ENCODE measurements at regions of chr17 and their contacts with region 1.

Region 1: DNA sequence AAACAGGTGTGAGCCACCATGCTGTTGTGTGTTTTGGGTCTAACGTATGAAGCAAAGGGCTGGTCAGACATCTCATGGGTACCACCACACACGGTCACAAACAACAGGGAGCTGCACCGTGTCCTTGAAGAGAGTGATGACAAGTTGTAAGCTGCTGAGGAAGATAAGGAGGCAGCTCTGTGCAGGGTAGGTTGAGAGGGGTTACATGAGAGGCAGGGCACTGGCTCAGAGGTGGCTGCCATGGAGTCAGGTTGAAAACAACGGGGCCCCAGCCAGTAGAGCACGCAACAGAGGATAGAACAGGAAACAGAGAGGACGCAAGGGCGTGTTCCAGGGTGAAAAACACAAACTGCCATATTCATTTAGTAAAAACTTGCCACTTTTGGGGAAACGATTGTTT is 52.2 kb downstream of the TRARG1 start:
- DNase-seq: no peak
- H3K4me3 ChIP-seq: no peak overlapping the region
- H3K4me3 Mint-ChIP-seq: peak overlapping the region in 1 of 2 donors; percentile 49
- H3K27ac ChIP-seq: no peak overlapping the region
- H3K27ac Mint-ChIP-seq: peak overlapping the region in 1 of 7 donors; percentile 47
- H3K4me1 ChIP-seq: no peaks in the 10 kb centered on the region
- H3K4me1 Mint-ChIP-seq: peaks cover 3% of the 10 kb centered on the region
- H3K27me3 ChIP-seq: peaks cover 0 to 3% of the 10 kb centered on the region in 2 donors
- H3K27me3 Mint-ChIP-seq: peaks cover 16 to 32% (median 26%) of the 10 kb centered on the region in 3 donors
- CTCF ChIP-seq: no peak

Region 2: DNA sequence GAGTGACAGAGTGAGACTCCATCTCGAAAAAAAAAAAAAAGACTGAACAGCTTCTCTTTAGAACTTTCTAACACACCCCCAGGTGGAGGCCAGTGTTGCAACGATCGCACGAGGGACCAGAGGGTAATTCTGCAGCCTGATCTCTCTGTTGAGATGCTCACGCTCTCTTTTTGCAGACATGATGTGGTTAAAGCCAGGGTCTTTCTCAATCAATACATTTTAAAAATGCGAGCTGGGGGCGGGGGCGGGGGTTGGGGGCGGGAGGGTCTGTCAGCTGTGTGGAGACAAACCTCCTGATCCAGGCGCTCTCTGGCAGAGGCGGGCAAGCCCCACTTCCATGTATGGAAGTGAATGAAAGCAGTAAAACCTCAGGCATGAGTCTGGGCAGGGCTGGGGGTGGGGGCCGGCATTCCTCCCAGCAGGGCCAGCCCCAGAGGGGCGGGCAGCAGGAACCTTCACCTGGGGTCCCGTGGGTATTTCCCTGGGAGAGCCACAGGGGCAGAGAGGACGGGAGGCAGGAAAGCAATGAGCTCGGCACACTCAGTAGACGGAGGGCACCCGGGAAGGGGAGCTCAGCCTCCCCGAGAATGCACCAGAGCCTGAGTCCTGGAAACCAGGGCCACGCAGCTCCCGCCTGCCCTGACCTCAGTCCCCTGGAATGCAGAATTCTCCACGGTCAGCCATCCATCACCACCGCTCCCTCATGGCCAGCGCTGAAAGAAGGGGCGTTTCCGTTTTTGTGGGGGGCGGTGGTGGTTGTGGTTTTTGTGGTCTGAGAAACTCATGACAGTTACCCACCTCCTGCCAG is 380.2 kb before region 1 on chr17:
- intact Hi-C with region 1: no loop called
- DNase-seq: no peak
- H3K4me3 ChIP-seq: no peak overlapping the region
- H3K4me3 Mint-ChIP-seq: peak overlapping the region in 1 of 2 donors; percentile 55
- H3K27ac ChIP-seq: no peak overlapping the region
- H3K27ac Mint-ChIP-seq: no peak overlapping the region
- H3K4me1 ChIP-seq: no peaks in the 10 kb centered on the region
- H3K4me1 Mint-ChIP-seq: no peaks in the 10 kb centered on the region
- H3K27me3 ChIP-seq: peaks cover 2 to 17% of the 10 kb centered on the region in 2 donors
- H3K27me3 Mint-ChIP-seq: peaks cover 20 to 35% (median 23%) of the 10 kb centered on the region in 3 donors
- CTCF ChIP-seq: no peak

Region 3: DNA sequence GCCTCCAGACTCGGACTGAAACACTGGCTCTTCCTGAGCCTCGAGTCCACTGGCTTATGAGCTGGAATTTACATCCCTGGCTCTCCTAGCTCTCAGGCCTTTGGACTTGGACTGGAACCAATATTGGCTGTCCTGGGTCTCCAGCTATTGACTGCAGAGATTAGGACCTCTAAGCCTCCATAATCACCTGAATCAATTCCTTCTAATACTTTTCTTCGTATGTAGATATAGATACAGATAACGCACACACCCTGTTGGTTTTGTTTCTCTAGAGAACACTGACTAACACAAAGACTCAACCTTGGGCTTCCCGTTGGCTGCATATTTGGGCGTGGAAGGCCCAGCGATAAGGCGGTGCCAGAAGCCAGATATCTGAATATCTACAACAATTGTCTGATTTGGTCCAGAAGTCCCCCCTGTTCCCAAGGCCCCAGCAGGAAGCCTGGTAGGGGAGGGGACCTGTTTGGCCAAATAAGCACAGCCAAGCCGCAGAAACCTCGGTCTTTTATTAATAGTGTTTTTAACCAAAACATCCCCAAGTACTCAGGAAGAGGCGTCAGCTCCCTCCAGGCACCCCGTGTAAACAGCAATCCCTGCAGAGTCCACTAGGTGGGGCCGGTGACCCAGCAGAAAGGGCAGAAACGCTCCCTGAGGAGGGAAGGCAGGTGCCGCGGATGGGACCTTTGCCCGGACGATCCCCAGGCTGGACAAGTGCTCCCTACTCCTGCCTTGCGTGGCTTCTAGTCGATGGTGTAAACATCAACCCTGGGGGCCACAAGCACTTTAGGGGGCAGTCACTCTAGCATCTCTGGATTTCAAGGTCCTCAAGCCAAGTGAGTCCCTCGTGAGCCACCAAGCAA is 208.9 kb before region 1 on chr17:
- intact Hi-C with region 1: loop called (anchors 5 to 10 kb)
- DNase-seq: peak; percentile 57 to 71 (median 65)
- H3K4me3 ChIP-seq: no peak overlapping the region
- H3K4me3 Mint-ChIP-seq: no peak overlapping the region
- H3K27ac ChIP-seq: peak overlapping the region in 1 of 2 donors; percentile 6
- H3K27ac Mint-ChIP-seq: peak overlapping the region in 2 of 7 donors; percentile 65
- H3K4me1 ChIP-seq: peaks cover 5 to 10% of the 10 kb centered on the region in 2 donors
- H3K4me1 Mint-ChIP-seq: peaks cover 9% of the 10 kb centered on the region
- H3K27me3 ChIP-seq: no peaks in the 10 kb centered on the region
- H3K27me3 Mint-ChIP-seq: peaks cover 0 to 3% (median 3%) of the 10 kb centered on the region in 3 donors
- CTCF ChIP-seq: peak; percentile 91

Region 4: DNA sequence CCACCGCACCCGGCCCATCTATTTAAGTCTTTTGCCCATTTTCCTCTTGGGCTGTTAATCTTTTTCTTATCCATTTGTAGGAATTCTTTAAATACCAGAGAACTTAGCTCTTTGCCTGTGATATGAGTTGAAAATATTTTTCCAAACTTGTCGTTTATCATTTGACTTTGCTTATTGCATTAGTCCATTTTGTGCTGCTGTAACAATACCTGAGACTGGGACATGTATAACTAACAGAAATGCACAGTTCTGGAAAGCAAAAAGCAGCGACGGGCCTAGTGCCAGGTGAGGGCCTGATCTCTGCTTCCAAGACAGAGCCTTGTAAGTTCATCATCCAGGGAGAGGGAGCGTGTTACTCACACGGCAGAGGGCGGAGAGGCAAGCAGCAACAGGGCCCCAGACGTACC is 87.1 kb before region 1 on chr17:
- intact Hi-C with region 1: no loop called
- DNase-seq: no peak
- H3K4me3 ChIP-seq: no peak overlapping the region
- H3K4me3 Mint-ChIP-seq: no peak overlapping the region
- H3K27ac ChIP-seq: no peak overlapping the region
- H3K27ac Mint-ChIP-seq: no peak overlapping the region
- H3K4me1 ChIP-seq: no peaks in the 10 kb centered on the region
- H3K4me1 Mint-ChIP-seq: peaks cover 7% of the 10 kb centered on the region
- H3K27me3 ChIP-seq: no peaks in the 10 kb centered on the region
- H3K27me3 Mint-ChIP-seq: peaks cover 4 to 22% (median 20%) of the 10 kb centered on the region in 3 donors
- CTCF ChIP-seq: no peak

Region 5: GRCh38 chr17:1260086-1260769 is 71.5 kb before region 1 on chr17:
- intact Hi-C with region 1: loop called (anchors 1 to 5 kb)
- DNase-seq: no peak
- H3K4me3 ChIP-seq: peak overlapping the region in 1 of 3 experiments; percentile 77
- H3K4me3 Mint-ChIP-seq: peak overlapping the region in 1 of 2 donors; percentile 77
- H3K27ac ChIP-seq: no peak overlapping the region
- H3K27ac Mint-ChIP-seq: no peak overlapping the region
- H3K4me1 ChIP-seq: peaks cover 8 to 9% of the 10 kb centered on the region in 2 donors
- H3K4me1 Mint-ChIP-seq: peaks cover 14% of the 10 kb centered on the region
- H3K27me3 ChIP-seq: peaks cover 19 to 51% of the 10 kb centered on the region in 2 donors
- H3K27me3 Mint-ChIP-seq: peaks cover 57 to 79% (median 77%) of the 10 kb centered on the region in 3 donors
- CTCF ChIP-seq: no peak

Region 6: GRCh38 chr17:1267471-1267947 is 64.2 kb before region 1 on chr17:
- intact Hi-C with region 1: loop called in 1 of 2 experiments (anchors 5 kb)
- DNase-seq: no peak
- H3K4me3 ChIP-seq: peak overlapping the region; percentile 40 to 87 (median 83)
- H3K4me3 Mint-ChIP-seq: peak overlapping the region; percentile 80 to 86
- H3K27ac ChIP-seq: peak overlapping the region; percentile 72 to 79
- H3K27ac Mint-ChIP-seq: peak overlapping the region in 5 of 7 donors; percentile 12 to 86 (median 60)
- H3K4me1 ChIP-seq: peaks cover 11 to 15% of the 10 kb centered on the region in 2 donors
- H3K4me1 Mint-ChIP-seq: peaks cover 15% of the 10 kb centered on the region
- H3K27me3 ChIP-seq: peaks cover 10 to 31% of the 10 kb centered on the region in 2 donors
- H3K27me3 Mint-ChIP-seq: peaks cover 33 to 57% (median 51%) of the 10 kb centered on the region in 3 donors
- CTCF ChIP-seq: no peak

Region 7: GRCh38 chr17:1275962-1276736 is 55.6 kb before region 1 on chr17:
- intact Hi-C with region 1: loop called (anchors 5 kb)
- DNase-seq: peak; percentile 38 to 58 (median 47)
- H3K4me3 ChIP-seq: no peak overlapping the region
- H3K4me3 Mint-ChIP-seq: peak overlapping the region in 1 of 2 donors; percentile 60
- H3K27ac ChIP-seq: no peak overlapping the region
- H3K27ac Mint-ChIP-seq: peak overlapping the region in 1 of 7 donors; percentile 32
- H3K4me1 ChIP-seq: no peaks in the 10 kb centered on the region
- H3K4me1 Mint-ChIP-seq: peaks cover 8% of the 10 kb centered on the region
- H3K27me3 ChIP-seq: peaks cover 0 to 42% of the 10 kb centered on the region in 2 donors
- H3K27me3 Mint-ChIP-seq: peaks cover 49 to 71% (median 53%) of the 10 kb centered on the region in 3 donors
- CTCF ChIP-seq: peak; percentile 88